Endothelial cell of umbilical vein (primary cell): ENCODE measurements at regions of chr3 and their contacts with region 1.

Region 1: GRCh38 chr3:133487920-133488540 is 85.5 kb upstream of the CDV3 start:
- DNase-seq: peak; percentile 37
- H3K4me3 ChIP-seq: no peak overlapping the region
- H3K27ac ChIP-seq: no peak overlapping the region
- H3K4me1 ChIP-seq: no peaks in the 10 kb centered on the region
- H3K27me3 ChIP-seq: no peaks in the 10 kb centered on the region
- CTCF ChIP-seq: peak; percentile 53 to 54
- POLR2A ChIP-seq: no peak

Region 2: GRCh38 chr3:133464573-133464972 is 23.5 kb before region 1 on chr3:
- CTCF ChIA-PET with region 1: interaction called, 12 read pairs
- POLR2A ChIA-PET with region 1: no interaction called
- dilution Hi-C with region 1: no loop called
- intact Hi-C with region 1: no loop called
- DNase-seq: peak; percentile 52
- H3K4me3 ChIP-seq: no peak overlapping the region
- H3K27ac ChIP-seq: no peak overlapping the region
- H3K4me1 ChIP-seq: no peaks in the 10 kb centered on the region
- H3K27me3 ChIP-seq: peaks cover 4 to 13% of the 10 kb centered on the region in 2 experiments
- CTCF ChIP-seq: peak; percentile 13 to 25
- POLR2A ChIP-seq: no peak

Region 3: DNA sequence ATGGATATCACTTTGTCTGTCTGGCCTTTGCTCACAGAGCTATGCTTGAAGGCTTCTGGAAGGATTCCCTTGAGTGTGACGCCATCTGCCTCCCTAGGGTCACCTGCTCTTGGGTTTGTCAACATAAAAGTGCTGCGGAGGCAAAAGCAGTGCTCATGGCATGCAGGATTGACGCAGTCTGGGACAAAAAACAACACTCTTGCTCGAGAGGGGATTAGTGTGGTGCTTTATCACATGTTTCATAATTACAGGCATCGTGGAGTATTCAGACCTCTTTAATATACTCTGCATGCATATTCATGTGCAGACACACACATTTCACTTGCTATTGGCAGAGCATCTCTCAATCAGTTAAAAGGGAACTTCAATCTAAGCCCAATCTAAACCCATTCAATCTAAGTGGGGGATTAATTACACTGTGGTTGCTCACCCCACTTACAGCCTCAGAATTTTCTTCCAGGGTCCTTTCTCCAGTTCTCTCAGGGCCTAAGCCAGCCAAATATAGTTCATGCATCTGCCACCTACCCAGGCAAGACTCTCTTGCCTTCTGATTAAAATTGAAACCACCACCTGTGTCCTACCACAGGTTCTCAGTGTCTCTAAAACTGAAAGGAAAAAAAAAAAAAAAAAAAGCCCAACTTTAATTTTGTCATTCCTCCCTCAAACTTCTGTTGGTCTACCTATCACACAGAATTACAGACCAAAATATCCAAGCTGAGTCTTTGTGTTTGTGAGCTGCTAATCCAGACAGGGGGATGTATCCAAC is 12.6 kb before region 1 on chr3:
- CTCF ChIA-PET with region 1: interaction called, 13 read pairs
- POLR2A ChIA-PET with region 1: no interaction called
- dilution Hi-C with region 1: no loop called
- intact Hi-C with region 1: no loop called
- DNase-seq: no peak
- H3K4me3 ChIP-seq: no peak overlapping the region
- H3K27ac ChIP-seq: no peak overlapping the region
- H3K4me1 ChIP-seq: no peaks in the 10 kb centered on the region
- H3K27me3 ChIP-seq: peaks cover 0 to 2% of the 10 kb centered on the region in 2 experiments
- CTCF ChIP-seq: no peak
- POLR2A ChIP-seq: no peak

Region 4: GRCh38 chr3:133661454-133662277 is 173.6 kb after region 1 on chr3 and contains the start of gene TOPBP1:
- CTCF ChIA-PET with region 1: interaction called, 3 read pairs
- POLR2A ChIA-PET with region 1: no interaction called
- dilution Hi-C with region 1: no loop called
- intact Hi-C with region 1: loop called (anchors 5 kb)
- DNase-seq: peak; percentile 69
- H3K4me3 ChIP-seq: peak within 1 kb of the TSS; percentile 60 to 86 (median 62)
- H3K27ac ChIP-seq: peak within 1 kb of the TSS; percentile 90
- H3K4me1 ChIP-seq: peaks cover 22% of the 10 kb centered on the region
- H3K27me3 ChIP-seq: no peaks in the 10 kb centered on the region
- CTCF ChIP-seq: no peak
- POLR2A ChIP-seq: peak; percentile 73
- total RNA-seq, gene TOPBP1: 42.2 and 42.4 TPM in 2 replicates

Region 5: DNA sequence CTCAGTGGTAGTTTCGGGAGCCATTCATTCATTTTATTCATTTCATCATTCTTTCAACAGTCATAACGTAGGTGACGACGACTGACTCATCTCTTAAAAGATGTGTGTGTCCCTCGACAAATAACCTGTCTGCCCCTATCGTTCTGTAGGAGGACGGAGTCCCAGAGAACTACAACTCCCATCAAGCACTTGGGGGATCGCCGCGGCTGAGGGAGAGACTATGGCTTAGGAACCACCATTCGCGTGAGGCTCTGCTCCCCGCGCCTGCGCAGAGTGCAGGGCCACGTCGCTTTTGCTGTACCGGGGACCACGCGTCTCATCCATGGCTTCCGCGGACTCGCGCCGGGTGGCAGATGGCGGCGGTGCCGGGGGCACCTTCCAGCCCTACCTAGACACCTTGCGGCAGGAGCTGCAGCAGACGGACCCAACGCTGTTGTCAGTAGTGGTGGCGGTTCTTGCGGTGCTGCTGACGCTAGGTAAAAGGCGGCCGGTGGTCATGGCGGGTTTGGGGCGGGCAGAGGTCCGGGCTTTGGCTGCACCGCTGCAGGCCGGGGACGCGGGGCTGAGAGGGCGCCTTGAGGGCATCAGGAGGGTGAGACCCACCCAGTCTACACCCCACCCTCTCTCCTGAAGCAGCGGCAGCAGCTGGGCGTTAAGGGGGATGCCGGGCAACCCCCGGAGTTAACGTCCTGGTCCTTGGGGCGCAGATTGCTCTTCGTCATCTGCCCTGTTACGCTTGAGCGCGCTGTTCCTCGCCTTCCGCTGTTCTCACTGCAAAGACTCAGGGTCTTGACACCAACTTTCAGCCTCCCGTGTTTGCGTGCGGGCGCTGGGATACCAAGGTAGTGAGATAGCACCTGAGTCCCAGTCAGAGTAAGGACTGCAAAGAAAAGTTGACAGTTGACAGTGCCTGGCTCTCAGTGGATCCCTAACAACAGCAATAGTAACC is 317.8 kb after region 1 on chr3 and contains the start of gene SRPRB:
- CTCF ChIA-PET with region 1: no interaction called
- POLR2A ChIA-PET with region 1: interaction called, 5 read pairs
- dilution Hi-C with region 1: no loop called
- intact Hi-C with region 1: loop called (anchors 2 kb)
- DNase-seq: peak; percentile 95
- H3K4me3 ChIP-seq: peak within 1 kb of the TSS; percentile 71 to 95 (median 82)
- H3K27ac ChIP-seq: peak within 1 kb of the TSS; percentile 35
- H3K4me1 ChIP-seq: peaks cover 6% of the 10 kb centered on the region
- H3K27me3 ChIP-seq: peaks cover 3 to 7% of the 10 kb centered on the region in 2 experiments
- CTCF ChIP-seq: no peak
- POLR2A ChIP-seq: no peak
- total RNA-seq, gene SRPRB: 59.5 and 69.2 TPM in 2 replicates